Activated T-helper 2 cell treated with anti-CD3 and anti-CD28 coated beads, Interferon-gamma antibody, Interleukin-2, Interleukin-4, amounts not matched to agents 10 μg/mL and 5 μg/mL and 100 μg/mL, durations not matched to agents 14 hours and 24 hours and 36 hours (primary cell): ENCODE measurements at regions of chr17 and their contacts with region 1.

Region 1: DNA sequence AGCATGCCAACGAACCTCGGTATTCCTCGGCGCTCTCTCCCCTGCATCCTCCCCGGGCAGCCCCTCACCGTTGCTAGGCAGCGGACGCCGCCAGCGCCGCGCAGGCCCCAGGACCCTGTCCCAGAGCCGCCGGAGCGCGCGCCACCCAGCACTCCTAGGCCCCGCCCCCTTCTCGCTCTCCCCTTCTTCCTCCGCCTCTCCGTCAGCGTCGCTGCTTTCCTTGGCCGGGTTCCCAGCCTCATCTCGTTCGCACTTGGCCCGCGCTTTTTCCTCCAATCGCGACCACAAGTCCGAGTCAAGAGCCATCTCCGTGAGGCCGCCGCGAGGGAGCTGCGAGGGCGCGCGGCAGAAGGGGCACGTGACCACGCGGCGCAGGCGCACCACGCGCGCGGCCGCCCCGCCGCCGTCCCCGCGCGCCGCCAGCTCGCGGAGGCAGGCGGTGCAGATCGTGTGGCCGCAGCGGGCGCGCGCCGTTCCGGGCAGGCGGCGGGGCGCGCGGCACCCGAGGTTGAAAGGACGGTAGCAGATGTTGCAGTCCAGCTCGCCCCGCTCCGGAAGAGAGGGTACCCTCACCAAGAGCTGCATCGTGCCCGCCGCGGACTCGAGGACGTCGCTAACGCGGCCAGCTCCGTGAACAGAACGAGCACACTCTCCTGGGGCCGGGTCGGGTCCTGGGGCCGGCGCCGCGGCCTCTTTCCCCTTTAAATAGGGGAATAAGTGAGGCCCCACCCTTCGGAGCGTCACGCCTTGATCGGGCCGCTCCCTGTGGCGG is at the start of gene RNF227:
- DNase-seq: peak; percentile 83
- H3K4me3 Mint-ChIP-seq: peak within 1 kb of the TSS; percentile 92
- H3K27ac Mint-ChIP-seq: peak within 1 kb of the TSS; percentile 96
- H3K4me1 Mint-ChIP-seq: peaks cover 22% of the 10 kb centered on the region
- H3K27me3 Mint-ChIP-seq: no peaks in the 10 kb centered on the region
- total RNA-seq, gene RNF227: 4.8 and 5.0 TPM in 2 replicates

Region 2: GRCh38 chr17:7887482-7888183 is 28.2 kb before region 1 on chr17:
- intact Hi-C with region 1: loop called (anchors 2 kb)
- DNase-seq: peak; percentile 87
- H3K4me3 Mint-ChIP-seq: no peak overlapping the region
- H3K27ac Mint-ChIP-seq: no peak overlapping the region
- H3K4me1 Mint-ChIP-seq: peaks cover 8% of the 10 kb centered on the region
- H3K27me3 Mint-ChIP-seq: no peaks in the 10 kb centered on the region

Region 3: GRCh38 chr17:7931709-7932482 is 16.1 kb after region 1 on chr17 and contains the starts of genes CNTROB and TRAPPC1:
- intact Hi-C with region 1: loop called (anchors 1 kb)
- DNase-seq: peak; percentile 100
- H3K4me3 Mint-ChIP-seq: peak within 1 kb of the TSS; percentile 97
- H3K27ac Mint-ChIP-seq: peak within 1 kb of the TSS; percentile 99
- H3K4me1 Mint-ChIP-seq: peaks cover 41% of the 10 kb centered on the region
- H3K27me3 Mint-ChIP-seq: no peaks in the 10 kb centered on the region
- total RNA-seq, gene CNTROB: 60.0 and 60.3 TPM in 2 replicates
- total RNA-seq, gene TRAPPC1: 156 and 190 TPM in 2 replicates

Region 4: DNA sequence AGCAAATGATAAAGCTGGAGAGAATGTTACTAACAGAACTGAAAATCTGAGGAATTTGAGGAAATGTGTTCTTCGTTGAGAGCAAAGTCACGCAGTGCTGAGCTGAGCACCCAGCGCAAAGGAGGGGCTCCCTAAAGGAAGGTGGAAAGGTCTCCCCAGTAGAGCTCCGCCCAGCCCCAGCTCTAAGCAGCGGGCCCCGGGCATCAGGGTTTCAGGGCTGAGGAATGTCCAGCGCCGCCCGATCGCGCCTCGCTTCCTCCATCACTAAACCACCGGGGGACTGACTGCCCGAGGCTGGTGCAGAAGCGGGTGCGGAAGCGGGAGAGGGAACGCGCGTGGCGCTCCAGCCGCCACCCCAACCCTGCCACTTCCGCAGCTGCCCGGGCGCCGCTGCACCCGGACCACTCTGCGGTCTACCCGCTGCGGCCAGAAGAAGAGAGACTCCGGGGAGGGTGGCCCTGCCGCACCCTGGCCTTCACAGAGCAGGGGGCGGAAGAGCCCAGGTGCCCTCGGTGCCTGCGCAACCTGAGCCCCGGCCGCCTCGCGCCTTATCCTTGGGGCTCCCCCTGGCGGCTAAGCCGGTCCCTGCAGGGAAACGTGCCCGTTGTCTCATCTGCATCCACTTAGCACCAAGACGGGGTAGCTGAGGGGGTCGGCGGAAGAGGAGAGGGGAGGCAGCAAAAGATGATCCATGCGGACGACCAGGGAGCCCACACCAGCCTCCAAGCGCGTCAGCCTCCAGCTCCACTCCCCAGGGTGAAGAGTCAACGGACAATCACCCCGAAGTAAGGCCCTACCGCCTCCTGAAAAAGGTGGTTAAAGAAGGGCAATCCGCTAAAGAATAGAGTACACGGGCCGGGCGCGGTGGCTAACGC is 74.2 kb after region 1 on chr17:
- intact Hi-C with region 1: loop called (anchors 1 kb)
- DNase-seq: peak; percentile 86
- H3K4me3 Mint-ChIP-seq: peak overlapping the region; percentile 67
- H3K27ac Mint-ChIP-seq: peak overlapping the region; percentile 73
- H3K4me1 Mint-ChIP-seq: peaks cover 20% of the 10 kb centered on the region
- H3K27me3 Mint-ChIP-seq: peaks cover 17% of the 10 kb centered on the region

Region 5: DNA sequence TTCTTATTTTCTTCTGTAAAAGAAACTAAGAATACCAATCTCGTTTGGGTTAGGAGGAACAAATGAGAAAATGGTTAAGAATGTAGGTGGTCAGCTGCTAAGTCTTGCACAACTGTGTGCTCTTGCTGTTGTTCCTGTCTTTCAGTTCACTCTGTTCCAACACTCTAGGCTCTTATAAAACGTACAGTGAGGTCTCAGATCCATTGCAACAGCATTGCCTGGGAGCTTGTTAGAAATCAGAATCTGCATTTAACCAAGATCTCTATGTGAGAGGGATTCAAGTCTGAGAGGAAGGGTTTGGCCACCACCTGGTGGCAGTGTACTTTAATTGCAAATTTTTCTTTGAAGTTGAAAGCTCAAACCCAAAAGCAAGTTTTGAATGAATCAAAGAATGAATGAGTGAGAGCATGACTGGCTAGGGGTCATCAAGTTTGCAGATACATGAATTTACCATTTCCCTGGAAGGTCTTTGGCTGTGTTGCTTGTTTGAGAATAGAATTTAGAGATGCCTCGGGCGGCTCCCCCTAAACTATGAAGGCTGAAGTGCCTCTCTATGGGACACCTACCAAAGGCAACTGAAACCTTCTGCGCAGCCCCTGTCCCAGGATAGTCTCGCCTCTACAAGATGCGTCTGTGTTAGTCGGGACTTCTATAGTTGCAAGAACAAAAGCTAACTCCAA is 125.6 kb after region 1 on chr17:
- intact Hi-C with region 1: loop called (anchors 5 kb)
- DNase-seq: peak; percentile 22
- H3K4me3 Mint-ChIP-seq: no peak overlapping the region
- H3K27ac Mint-ChIP-seq: no peak overlapping the region
- H3K4me1 Mint-ChIP-seq: peaks cover 3% of the 10 kb centered on the region
- H3K27me3 Mint-ChIP-seq: peaks cover 27% of the 10 kb centered on the region

Region 6: GRCh38 chr17:8057691-8058114 is 141.9 kb after region 1 on chr17:
- intact Hi-C with region 1: loop called (anchors 5 kb)
- DNase-seq: peak; percentile 30
- H3K4me3 Mint-ChIP-seq: no peak overlapping the region
- H3K27ac Mint-ChIP-seq: no peak overlapping the region
- H3K4me1 Mint-ChIP-seq: peaks cover 26% of the 10 kb centered on the region
- H3K27me3 Mint-ChIP-seq: peaks cover 47% of the 10 kb centered on the region